ENCODE measurements at regions of chr16 and their contacts with region 1.

Region 1: GRCh38 chr16:22077700-22078313 is 14.5 kb upstream of the VWA3A start:
- DNase-seq: peak; percentile 60 to 69
- H3K4me3 ChIP-seq: no peak overlapping the region
- H3K27ac ChIP-seq: no peak overlapping the region
- H3K4me1 ChIP-seq: no peaks in the 10 kb centered on the region
- H3K27me3 ChIP-seq: no peaks in the 10 kb centered on the region
- CTCF ChIP-seq: peak; percentile 62 to 75

Region 2: GRCh38 chr16:21937336-21937829 is 140.4 kb before region 1 on chr16:
- intact Hi-C with region 1: no loop called
- DNase-seq: no peak
- H3K4me3 ChIP-seq: no peak overlapping the region
- H3K27ac ChIP-seq: no peak overlapping the region
- H3K4me1 ChIP-seq: peaks cover 0 to 8% (median 0%) of the 10 kb centered on the region in 4 donors
- H3K27me3 ChIP-seq: no peaks in the 10 kb centered on the region
- CTCF ChIP-seq: no peak

Region 3: GRCh38 chr16:22001591-22001990 is 76.2 kb before region 1 on chr16:
- intact Hi-C with region 1: loop called (anchors 5 kb)
- DNase-seq: no peak
- H3K4me3 ChIP-seq: no peak overlapping the region
- H3K27ac ChIP-seq: no peak overlapping the region
- H3K4me1 ChIP-seq: peaks cover 0 to 10% (median 3%) of the 10 kb centered on the region in 4 donors
- H3K27me3 ChIP-seq: no peaks in the 10 kb centered on the region
- CTCF ChIP-seq: no peak